HCT116 (cell line): ENCODE measurements at regions of chr6 and their contacts with region 1.

Region 1: DNA sequence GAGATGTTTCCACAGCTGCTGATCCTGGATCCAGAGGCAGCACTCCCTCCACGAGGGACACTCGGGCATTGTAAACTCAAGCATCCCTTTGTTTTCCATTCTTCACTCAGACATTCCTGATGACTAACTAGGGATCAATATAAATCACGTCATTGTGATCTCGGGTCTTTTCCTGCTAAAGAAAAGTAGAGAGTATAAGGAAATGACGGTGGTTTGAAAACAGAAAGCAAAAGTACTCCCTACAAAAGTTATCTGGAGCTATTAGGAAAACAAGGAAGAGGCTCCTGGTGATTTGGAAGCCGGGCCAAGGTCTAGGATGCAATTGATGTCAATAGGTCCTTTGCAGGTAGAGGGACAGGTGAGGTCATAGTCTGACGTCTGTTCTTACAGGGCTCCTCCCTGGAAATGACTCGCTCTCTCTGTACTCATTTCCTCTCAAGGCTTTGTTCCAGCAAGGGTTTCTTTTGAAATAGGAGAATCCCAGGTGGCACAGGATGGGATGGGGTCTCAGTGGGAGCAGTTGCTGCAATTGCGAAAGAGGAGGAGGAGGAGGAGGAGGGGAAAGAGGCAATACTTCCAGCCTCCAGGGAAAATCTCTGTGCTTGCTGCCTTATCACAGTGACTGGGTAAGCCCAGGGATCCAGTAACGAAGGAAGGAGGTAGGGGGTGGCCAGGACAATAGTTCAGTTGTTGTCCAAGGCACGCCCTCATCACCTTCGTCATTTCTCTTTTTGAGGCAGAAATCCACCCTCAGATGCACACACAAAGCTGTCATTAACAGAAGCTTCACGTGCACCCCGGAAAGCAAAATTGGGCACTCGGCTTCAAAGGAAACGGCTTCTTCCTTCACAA is 222.9 kb downstream of the LY86 start:
- DNase-seq: peak; percentile 100
- ATAC-seq: peak; percentile 86
- H3K4me3 ChIP-seq: peak overlapping the region; percentile 22 to 31
- H3K27ac ChIP-seq: peak overlapping the region; percentile 71
- H3K4me1 ChIP-seq: peaks cover 32 to 95% of the 10 kb centered on the region in 2 experiments
- H3K27me3 ChIP-seq: no peaks in the 10 kb centered on the region
- CTCF ChIP-seq: no peak
- POLR2A ChIP-seq: peak; percentile 32
- RAD21 ChIP-seq: no peak

Region 2: DNA sequence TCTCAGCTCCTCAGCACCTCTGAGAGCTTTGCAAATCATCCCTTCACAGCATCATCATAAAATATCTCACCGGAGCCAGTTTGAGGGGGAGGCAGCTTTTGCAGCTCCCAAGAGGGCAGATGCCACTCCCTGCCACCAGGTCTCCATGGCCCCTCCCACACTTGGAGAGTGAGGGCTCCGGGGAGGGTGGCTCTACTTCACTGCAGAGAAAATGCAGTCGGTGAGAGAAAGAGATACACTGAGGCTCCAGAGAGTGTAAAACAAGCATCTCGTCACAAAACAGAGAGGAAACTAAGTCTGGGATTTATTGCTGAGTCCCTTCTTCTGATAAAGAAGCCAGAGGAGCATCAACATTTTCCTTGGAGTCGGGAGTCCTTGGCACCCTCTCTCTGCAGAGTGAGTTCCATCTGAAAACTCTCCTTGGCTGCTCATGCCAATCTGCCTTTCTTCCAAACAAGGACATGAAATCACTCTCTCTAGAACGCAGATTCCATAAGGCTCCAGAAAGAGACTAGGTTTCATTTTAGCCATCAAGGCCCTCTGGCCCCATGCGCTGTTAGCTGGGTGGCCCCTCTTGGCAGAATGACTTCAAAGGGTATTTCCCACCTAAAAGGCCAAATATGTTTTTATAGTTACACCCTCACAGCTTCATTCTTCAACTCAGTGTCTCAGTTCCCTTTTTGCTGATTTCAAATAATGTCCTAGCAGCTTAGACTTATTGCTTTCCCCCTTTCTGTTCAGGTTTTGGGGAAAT is 420.4 kb before region 1 on chr6:
- CTCF ChIA-PET with region 1: no interaction called
- POLR2A ChIA-PET with region 1: no interaction called
- RAD21 ChIA-PET with region 1: no interaction called
- intact Hi-C with region 1: no loop called
- DNase-seq: no peak
- ATAC-seq: no peak
- H3K4me3 ChIP-seq: no peak overlapping the region
- H3K27ac ChIP-seq: no peak overlapping the region
- H3K4me1 ChIP-seq: no peaks in the 10 kb centered on the region
- H3K27me3 ChIP-seq: peaks cover 29% of the 10 kb centered on the region
- CTCF ChIP-seq: no peak
- POLR2A ChIP-seq: no peak
- RAD21 ChIP-seq: no peak

Region 3: DNA sequence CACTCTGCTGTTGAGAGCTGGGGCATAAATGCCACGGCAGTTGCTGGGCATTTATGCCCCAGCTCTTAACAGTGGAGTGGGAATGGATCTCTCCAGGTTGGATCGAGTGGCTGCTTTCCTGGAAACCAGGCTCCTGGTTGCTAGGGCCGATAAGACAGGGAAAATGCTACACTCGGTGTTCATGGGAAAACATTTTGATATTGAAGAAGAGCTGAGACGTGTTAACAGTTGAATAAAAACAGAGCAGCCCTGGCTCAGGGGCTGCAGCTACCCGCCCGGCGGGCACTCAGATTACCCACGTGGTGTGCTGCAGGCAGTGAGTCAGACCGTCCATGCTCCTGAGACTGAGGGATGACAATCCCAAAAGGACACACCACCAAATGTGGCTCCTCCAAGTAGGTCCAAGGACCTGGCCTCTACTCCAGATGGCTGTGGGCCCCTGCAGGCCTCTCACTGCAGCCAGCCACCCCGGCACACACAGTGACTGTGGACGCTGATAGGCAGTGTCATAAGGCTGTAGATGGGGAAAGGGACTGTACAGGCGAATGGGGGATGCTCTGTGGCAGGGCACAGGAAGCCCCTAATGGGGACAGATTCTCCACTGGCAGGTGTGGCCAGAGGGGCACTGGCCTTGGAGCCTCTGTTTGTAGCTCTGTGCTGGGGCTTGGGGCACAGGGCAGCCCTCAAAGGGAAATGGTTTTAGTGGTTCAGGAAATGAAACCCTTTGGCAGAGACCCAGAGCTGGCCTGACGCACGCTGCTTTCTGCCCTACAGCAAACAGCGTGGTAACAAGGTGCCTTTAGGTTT is 14.9 kb after region 1 on chr6:
- CTCF ChIA-PET with region 1: interaction called, 3 read pairs
- POLR2A ChIA-PET with region 1: interaction called, 24 read pairs
- RAD21 ChIA-PET with region 1: interaction called in 1 of 2 experiments, 5 read pairs
- intact Hi-C with region 1: no loop called
- DNase-seq: no peak
- ATAC-seq: peak; percentile 74
- H3K4me3 ChIP-seq: peak overlapping the region in 1 of 2 experiments; percentile 22; a peak in 2 of 4 replicates
- H3K27ac ChIP-seq: peak overlapping the region; percentile 69
- H3K4me1 ChIP-seq: peaks cover 44 to 57% of the 10 kb centered on the region in 2 experiments
- H3K27me3 ChIP-seq: no peaks in the 10 kb centered on the region
- CTCF ChIP-seq: no peak
- POLR2A ChIP-seq: no peak
- RAD21 ChIP-seq: no peak

Region 4: GRCh38 chr6:6875814-6876470 is 64.6 kb after region 1 on chr6:
- CTCF ChIA-PET with region 1: no interaction called
- POLR2A ChIA-PET with region 1: no interaction called
- RAD21 ChIA-PET with region 1: no interaction called
- intact Hi-C with region 1: loop called (anchors 5 kb)
- DNase-seq: peak; percentile 66
- ATAC-seq: peak; percentile 78
- H3K4me3 ChIP-seq: no peak overlapping the region
- H3K27ac ChIP-seq: no peak overlapping the region
- H3K4me1 ChIP-seq: peaks cover 5 to 30% of the 10 kb centered on the region in 2 experiments
- H3K27me3 ChIP-seq: no peaks in the 10 kb centered on the region
- CTCF ChIP-seq: no peak
- POLR2A ChIP-seq: no peak
- RAD21 ChIP-seq: peak; percentile 31

Region 5: DNA sequence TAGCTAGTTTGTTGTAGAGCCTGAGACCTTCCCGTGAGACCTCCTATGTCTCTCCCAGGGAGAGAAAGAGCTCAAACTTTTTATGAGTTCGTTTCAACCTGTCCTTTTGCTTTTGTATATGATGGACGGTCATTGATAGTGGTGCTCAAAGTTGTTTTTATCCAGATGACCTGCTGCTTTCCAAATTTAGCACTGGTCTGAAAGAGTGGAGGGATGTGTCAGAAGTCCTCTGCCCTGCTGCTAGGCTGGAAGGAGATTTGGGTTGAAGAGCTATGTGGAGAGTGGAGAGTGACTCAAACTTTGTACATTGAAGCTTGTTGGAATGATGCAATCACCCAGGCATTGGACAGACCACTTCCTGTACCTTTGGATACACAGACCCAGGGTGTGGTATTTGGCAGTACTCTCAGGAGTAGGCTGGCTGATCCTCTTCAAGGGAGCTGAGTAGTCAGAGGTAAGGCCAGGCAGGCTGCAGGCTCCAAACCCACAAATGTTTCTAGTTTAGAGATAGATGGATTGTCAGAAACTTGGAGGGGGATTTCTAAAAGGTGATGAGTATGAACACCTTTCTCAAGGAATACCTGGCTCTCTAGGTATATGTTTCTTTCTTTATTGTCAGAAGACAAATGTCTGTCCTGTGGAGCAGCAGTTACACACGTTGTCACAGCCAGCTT is 247.0 kb after region 1 on chr6:
- CTCF ChIA-PET with region 1: no interaction called
- POLR2A ChIA-PET with region 1: interaction called, 6 read pairs
- RAD21 ChIA-PET with region 1: no interaction called
- intact Hi-C with region 1: loop called (anchors 5 kb)
- DNase-seq: peak; percentile 97
- ATAC-seq: peak; percentile 93
- H3K4me3 ChIP-seq: peak overlapping the region in 1 of 2 experiments; percentile 27; a peak in 3 of 4 replicates
- H3K27ac ChIP-seq: peak overlapping the region; percentile 56
- H3K4me1 ChIP-seq: peaks cover 42 to 58% of the 10 kb centered on the region in 2 experiments
- H3K27me3 ChIP-seq: no peaks in the 10 kb centered on the region
- CTCF ChIP-seq: no peak
- POLR2A ChIP-seq: peak; percentile 43
- RAD21 ChIP-seq: peak; percentile 34; the same call in 1 of the 2 replicates

Region 6: DNA sequence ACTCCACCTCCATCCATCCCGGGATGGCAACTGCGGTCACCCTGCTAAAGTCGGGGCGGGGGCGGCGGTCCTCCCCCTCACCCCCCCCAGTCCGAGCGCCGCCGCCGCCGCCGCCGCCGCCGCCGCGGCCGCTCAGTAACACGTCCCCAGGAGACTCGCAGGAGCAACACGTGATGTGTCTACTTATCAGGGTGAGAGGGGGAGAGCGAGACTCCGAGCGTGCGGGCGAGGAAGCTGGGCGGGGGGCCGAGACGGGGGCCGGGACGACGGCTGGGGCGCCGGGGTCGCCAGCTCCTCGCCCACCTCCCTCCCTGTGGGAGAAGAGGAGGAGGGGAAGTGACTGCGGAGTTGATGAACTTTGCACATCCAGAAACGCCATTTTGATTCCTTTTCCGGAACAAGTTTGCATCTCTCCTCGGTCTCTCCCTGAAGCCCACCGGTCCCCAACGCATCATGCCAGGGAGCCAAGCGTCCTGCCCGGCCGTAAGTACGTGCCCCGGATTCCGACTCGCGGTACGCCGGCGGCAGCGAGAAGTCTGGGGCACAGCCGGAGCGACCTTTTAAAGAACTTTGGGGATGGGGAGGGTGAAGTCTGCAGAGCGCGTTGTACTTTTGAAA is 296.3 kb after region 1 on chr6 and contains the start of gene RREB1:
- CTCF ChIA-PET with region 1: no interaction called
- POLR2A ChIA-PET with region 1: interaction called, 4 read pairs
- RAD21 ChIA-PET with region 1: no interaction called
- intact Hi-C with region 1: loop called (anchors 5 kb)
- DNase-seq: peak; percentile 15
- ATAC-seq: peak; percentile 70
- H3K4me3 ChIP-seq: peak within 1 kb of the TSS; percentile 90 to 95
- H3K27ac ChIP-seq: peak within 1 kb of the TSS; percentile 92
- H3K4me1 ChIP-seq: peaks cover 18 to 41% of the 10 kb centered on the region in 2 experiments
- H3K27me3 ChIP-seq: no peaks in the 10 kb centered on the region
- CTCF ChIP-seq: no peak
- POLR2A ChIP-seq: no peak
- RAD21 ChIP-seq: no peak
- total RNA-seq, gene RREB1: 47.9 TPM